Activated T-helper 1 cell treated with anti-CD3 and anti-CD28 coated beads, Interleukin-12 subunit alpha, Interleukin-12 subunit beta, Interleukin-2, Interleukin-4 antibody, amounts not matched to agents 30 ng/mL and 10 ng/mL and 1 ng/mL, durations not matched to agents 14 hours and 24 hours and 36 hours (primary cell): ENCODE measurements at regions of chr5 and their contacts with region 1.

Region 1: GRCh38 chr5:73565139-73565968 is at the starts of genes ANKRA2 and UTP15:
- DNase-seq: peak; percentile 98
- H3K4me3 Mint-ChIP-seq: peak within 1 kb of the TSS; percentile 95
- H3K27ac Mint-ChIP-seq: peak within 1 kb of the TSS; percentile 99
- H3K4me1 Mint-ChIP-seq: peaks cover 32% of the 10 kb centered on the region
- H3K27me3 Mint-ChIP-seq: no peaks in the 10 kb centered on the region
- total RNA-seq, gene ANKRA2: 15.8 and 18.8 TPM in 2 replicates
- total RNA-seq, gene UTP15: 61.0 and 64.1 TPM in 2 replicates

Region 2: GRCh38 chr5:71586941-71587765 is 1978.2 kb before region 1 on chr5 and contains the start of gene MCCC2:
- intact Hi-C with region 1: loop called (anchors 5 kb)
- DNase-seq: peak; percentile 96
- H3K4me3 Mint-ChIP-seq: peak within 1 kb of the TSS; percentile 95
- H3K27ac Mint-ChIP-seq: peak within 1 kb of the TSS; percentile 99
- H3K4me1 Mint-ChIP-seq: peaks cover 36% of the 10 kb centered on the region
- H3K27me3 Mint-ChIP-seq: no peaks in the 10 kb centered on the region
- total RNA-seq, gene MCCC2: 49.8 and 53.8 TPM in 2 replicates

Region 3: GRCh38 chr5:72847989-72848473 is 717.3 kb before region 1 on chr5:
- intact Hi-C with region 1: loop called (anchors 2 kb)
- DNase-seq: peak; percentile 80
- H3K4me3 Mint-ChIP-seq: peak overlapping the region; percentile 96
- H3K27ac Mint-ChIP-seq: peak overlapping the region; percentile 99
- H3K4me1 Mint-ChIP-seq: peaks cover 44% of the 10 kb centered on the region
- H3K27me3 Mint-ChIP-seq: peaks cover 7% of the 10 kb centered on the region

Region 4: DNA sequence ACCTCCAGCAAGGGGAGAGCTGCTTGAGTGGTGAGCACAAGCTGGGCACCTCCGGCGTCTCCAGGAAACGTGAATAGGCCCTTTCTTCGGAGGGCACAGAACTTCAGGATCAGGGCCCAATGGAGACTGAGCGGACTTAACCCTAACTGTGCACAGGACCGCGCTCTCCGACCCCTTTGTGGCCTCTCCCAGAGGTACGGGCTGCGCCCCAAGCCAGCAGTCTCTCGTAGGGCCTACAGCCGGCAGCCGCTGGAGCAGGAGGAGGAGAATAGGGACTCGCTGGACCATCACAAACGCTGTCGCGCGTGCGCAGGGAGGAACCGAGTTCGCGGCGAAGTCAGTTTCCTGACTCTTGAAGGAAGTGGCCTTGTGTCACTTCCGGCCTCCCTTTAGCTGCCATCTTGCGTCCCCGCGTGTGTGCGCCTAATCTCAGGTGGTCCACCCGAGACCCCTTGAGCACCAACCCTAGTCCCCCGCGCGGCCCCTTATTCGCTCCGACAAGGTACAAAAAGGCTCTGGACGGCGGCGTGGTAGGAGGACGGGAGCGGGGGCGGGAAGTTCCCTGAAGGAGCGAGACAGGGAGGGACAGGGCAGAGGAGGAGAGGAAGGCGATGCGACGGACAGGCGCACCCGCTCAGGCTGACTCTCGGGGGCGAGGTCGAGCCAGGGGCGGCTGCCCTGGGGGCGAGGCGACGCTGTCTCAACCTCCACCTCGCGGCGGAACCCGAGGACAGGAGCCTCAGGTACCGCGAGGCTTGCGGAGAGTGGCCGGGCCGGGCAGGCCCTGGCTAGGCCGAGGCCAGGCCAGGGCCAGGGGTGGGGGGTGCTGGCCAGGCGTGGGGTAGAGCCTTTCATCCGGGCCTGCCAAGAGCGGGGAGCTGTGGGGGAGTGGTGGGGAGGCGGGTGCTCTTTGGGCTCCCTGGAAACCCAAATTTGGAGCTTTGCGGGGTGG is 67.0 kb before region 1 on chr5 and contains the start of gene BTF3:
- intact Hi-C with region 1: loop called (anchors 1 kb)
- DNase-seq: peak; percentile 92
- H3K4me3 Mint-ChIP-seq: peak within 1 kb of the TSS; percentile 99
- H3K27ac Mint-ChIP-seq: peak within 1 kb of the TSS; percentile 99
- H3K4me1 Mint-ChIP-seq: peaks cover 39% of the 10 kb centered on the region
- H3K27me3 Mint-ChIP-seq: peaks cover 12% of the 10 kb centered on the region
- total RNA-seq, gene BTF3: 913 and 929 TPM in 2 replicates

Region 5: GRCh38 chr5:73519531-73520283 is 45.6 kb before region 1 on chr5:
- intact Hi-C with region 1: loop called (anchors 2 kb)
- DNase-seq: peak; percentile 70
- H3K4me3 Mint-ChIP-seq: peak overlapping the region; percentile 40
- H3K27ac Mint-ChIP-seq: peak overlapping the region; percentile 48
- H3K4me1 Mint-ChIP-seq: peaks cover 10% of the 10 kb centered on the region
- H3K27me3 Mint-ChIP-seq: peaks cover 2% of the 10 kb centered on the region

Region 6: DNA sequence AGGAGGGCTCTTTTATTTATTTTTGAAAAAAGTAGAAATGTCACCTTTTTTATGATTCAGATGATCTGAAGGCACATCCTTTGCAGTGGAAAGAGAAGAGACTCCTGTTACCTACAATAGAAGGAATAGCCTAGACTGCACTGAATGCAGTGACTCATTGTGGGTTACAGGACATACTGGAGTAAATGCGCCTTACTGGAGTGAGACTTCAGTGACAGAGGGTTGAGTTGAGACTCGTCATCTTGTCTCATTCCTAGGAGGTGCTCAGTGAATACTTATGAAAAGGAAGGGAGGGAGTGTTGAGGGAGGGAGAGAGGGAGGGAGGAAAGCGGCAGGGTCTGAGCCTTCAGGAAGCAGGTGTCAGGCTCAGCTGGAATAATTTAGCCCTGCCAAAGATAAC is 25.2 kb before region 1 on chr5:
- intact Hi-C with region 1: loop called (anchors 2 kb)
- DNase-seq: no peak
- H3K4me3 Mint-ChIP-seq: no peak overlapping the region
- H3K27ac Mint-ChIP-seq: no peak overlapping the region
- H3K4me1 Mint-ChIP-seq: peaks cover 21% of the 10 kb centered on the region
- H3K27me3 Mint-ChIP-seq: no peaks in the 10 kb centered on the region

Region 7: GRCh38 chr5:74684900-74685851 is 1119.8 kb after region 1 on chr5 and contains the start of gene HEXB:
- intact Hi-C with region 1: loop called (anchors 10 kb)
- DNase-seq: peak; percentile 83
- H3K4me3 Mint-ChIP-seq: peak within 1 kb of the TSS; percentile 90
- H3K27ac Mint-ChIP-seq: peak within 1 kb of the TSS; percentile 71
- H3K4me1 Mint-ChIP-seq: peaks cover 23% of the 10 kb centered on the region
- H3K27me3 Mint-ChIP-seq: peaks cover 14% of the 10 kb centered on the region
- total RNA-seq, gene HEXB: 62.7 and 71.4 TPM in 2 replicates